Natural killer cell (primary cell): ENCODE measurements at regions of chr3 and their contacts with region 1.

Region 1: DNA sequence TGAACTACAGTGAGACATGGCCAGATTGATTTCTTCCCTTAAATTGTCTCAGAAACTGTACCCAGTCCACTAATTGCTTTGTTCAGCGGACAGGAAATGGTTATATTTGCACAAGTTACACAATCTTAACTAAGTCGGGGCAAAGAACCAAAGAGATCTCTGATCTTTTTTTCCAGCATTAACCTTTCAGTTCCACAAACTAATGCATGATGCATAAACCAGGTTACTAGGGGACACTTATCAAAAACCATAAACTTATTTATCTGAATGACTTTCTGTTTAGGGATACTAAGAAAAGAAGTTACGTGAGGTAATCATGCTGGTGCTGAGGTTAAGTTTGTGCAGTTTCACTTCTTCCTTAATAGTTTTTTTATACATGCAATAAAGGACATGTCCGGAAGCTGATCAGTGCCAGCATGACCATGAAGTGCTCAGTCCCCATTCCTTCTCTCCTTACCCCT is 22.4 kb downstream of the FNDC3B start:
- DNase-seq: no peak
- ATAC-seq: peak; percentile 67 to 85 (median 77)
- H3K4me3 ChIP-seq: peak overlapping the region; percentile 26
- H3K4me3 Mint-ChIP-seq: peak overlapping the region; percentile 88
- H3K27ac ChIP-seq: peak overlapping the region; percentile 44
- H3K27ac Mint-ChIP-seq: peak overlapping the region; percentile 69 to 72
- H3K4me1 ChIP-seq: peaks cover 19% of the 10 kb centered on the region
- H3K4me1 Mint-ChIP-seq: peaks cover 80 to 87% of the 10 kb centered on the region in 2 donors
- H3K27me3 ChIP-seq: no peaks in the 10 kb centered on the region
- H3K27me3 Mint-ChIP-seq: no peaks in the 10 kb centered on the region
- CTCF ChIP-seq: no peak

Region 2: DNA sequence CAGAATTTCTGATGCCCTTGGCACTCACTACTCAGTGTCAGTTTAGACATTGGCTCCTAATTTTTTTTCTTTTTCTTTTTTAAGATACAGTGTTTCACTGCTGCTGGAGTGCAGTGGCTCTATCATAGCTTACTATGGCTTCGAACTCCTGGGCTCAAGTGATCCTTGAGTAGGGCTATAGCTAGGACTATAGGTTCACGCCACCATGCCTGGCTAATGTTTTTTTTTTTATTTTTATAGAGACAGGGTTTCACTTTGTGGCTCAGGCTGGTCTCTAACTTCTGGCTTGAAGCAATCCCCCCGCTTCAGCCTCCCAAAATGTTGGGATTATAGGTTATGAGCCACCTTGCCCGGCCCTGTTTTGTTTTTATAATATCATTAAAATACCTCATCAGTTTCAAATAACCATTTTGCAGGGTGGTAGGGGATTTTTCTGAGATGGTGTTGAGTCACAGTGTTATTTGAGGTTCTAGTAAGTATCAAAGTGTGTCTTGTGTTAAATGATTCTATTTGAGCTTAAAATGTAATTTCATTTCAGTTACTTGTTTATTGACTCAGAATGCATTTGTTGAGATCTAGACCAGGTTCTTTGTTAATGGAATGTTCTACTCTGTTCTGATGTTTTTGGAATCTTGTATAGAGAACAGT is 15.4 kb before region 1 on chr3:
- intact Hi-C with region 1: loop called (anchors 2 kb)
- DNase-seq: no peak
- ATAC-seq: peak; percentile 63 to 78 (median 72)
- H3K4me3 ChIP-seq: no peak overlapping the region
- H3K4me3 Mint-ChIP-seq: peak overlapping the region; percentile 4
- H3K27ac ChIP-seq: peak overlapping the region; percentile 30
- H3K27ac Mint-ChIP-seq: peak overlapping the region; percentile 82 to 93
- H3K4me1 ChIP-seq: peaks cover 12% of the 10 kb centered on the region
- H3K4me1 Mint-ChIP-seq: peaks cover 61 to 78% of the 10 kb centered on the region in 2 donors
- H3K27me3 ChIP-seq: no peaks in the 10 kb centered on the region
- H3K27me3 Mint-ChIP-seq: no peaks in the 10 kb centered on the region
- CTCF ChIP-seq: no peak

Region 3: DNA sequence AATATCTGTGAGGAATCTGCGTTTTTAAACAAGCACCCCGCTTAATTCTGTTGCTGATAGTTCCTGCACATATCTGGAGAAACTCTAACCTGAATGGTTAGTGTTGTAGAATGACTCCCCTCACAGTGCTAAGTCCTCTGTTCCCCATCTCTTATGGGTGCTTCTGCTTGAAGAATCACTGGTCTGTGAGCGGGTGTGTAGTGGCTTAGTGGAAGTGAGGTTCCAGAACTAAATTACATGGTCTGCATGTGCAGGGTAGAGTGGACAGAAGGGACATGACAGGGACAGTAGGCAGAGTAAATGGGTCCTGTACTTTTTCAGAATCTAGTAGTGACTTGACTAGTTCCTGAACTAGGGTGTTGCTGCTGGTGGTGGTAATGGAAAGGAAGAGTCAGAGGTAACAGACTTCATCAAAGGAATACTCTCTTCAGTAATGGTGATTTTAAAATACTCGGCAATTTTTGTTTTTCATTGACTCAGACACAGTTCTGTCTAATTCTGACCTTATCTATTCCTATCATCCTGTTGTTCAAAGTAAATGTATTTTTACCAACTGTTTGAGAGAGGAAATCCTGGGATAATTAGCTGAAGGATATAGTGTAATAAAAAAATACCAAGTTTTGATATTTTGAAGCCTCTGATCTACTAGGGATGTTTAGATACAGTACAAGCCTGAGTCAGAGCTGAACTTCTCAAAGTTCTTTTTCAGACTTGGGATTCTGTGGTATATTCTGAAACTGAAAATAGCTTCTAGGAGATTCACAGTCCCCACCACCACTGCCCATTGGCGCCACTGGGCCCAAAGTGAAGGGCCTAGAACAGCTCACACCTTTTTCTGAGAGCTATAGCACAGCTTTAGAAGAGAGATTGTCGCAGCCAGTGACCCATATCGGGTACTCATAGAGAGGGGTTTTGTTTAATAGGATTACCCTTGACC is 33.1 kb after region 1 on chr3:
- intact Hi-C with region 1: loop called (anchors 5 kb)
- DNase-seq: peak; percentile 25 to 61
- ATAC-seq: peak; percentile 82 to 93 (median 90)
- H3K4me3 ChIP-seq: no peak overlapping the region
- H3K4me3 Mint-ChIP-seq: peak overlapping the region; percentile 67
- H3K27ac ChIP-seq: peak overlapping the region; percentile 62
- H3K27ac Mint-ChIP-seq: peak overlapping the region; percentile 80 to 92
- H3K4me1 ChIP-seq: peaks cover 17% of the 10 kb centered on the region
- H3K4me1 Mint-ChIP-seq: peaks cover 79 to 80% of the 10 kb centered on the region in 2 donors
- H3K27me3 ChIP-seq: no peaks in the 10 kb centered on the region
- H3K27me3 Mint-ChIP-seq: no peaks in the 10 kb centered on the region
- CTCF ChIP-seq: no peak